Caco-2 (cell line): ENCODE measurements at regions of chr6 and their contacts with region 1.

Region 1: DNA sequence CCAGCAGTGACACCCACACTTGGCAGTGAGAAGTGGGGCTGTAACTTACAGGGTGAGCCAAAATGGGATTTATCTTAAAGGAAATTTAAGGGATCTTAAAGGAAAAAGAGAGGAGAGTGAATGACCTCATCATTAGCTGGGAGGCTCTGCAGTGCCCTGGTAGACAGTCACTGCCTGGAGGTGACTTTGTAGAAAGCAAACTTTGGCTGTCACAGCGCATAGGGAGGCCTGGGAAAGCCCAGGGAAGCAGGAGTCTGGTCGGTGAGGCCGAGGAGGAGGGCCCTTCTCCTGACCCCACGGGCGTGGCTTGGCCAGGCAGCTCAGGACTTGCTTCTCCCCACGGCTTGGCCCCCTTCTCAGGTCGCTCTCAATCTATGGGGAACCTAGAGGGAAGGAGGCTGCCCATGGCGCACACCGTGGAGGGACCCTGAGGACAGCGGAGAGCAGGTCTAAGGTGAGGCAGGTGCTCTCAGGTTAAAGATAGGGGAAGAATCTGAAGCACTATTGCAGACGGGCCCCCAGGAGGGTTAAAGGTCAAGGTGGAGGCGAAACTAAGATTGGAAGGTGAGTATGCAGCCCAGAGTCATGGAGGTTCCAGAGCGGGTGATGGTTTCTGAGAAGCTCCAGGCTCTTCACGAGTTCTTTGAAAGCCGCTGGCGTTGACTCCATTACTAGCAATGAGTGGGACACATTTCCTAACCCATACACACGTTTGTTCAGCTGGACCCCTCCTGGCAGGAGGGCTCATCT is 15.6 kb upstream of the RIPK1 start:
- DNase-seq: peak; percentile 63 to 74
- H3K4me3 ChIP-seq: peak overlapping the region; percentile 82
- H3K4me3 Mint-ChIP-seq: peak overlapping the region; percentile 84
- H3K27ac Mint-ChIP-seq: peak overlapping the region; percentile 89
- H3K4me1 ChIP-seq: peaks cover 13% of the 10 kb centered on the region
- H3K4me1 Mint-ChIP-seq: peaks cover 10% of the 10 kb centered on the region
- H3K27me3 ChIP-seq: no peaks in the 10 kb centered on the region
- H3K27me3 Mint-ChIP-seq: no peaks in the 10 kb centered on the region
- CTCF ChIP-seq: no peak

Region 2: GRCh38 chr6:2831392-2831791 is 221.3 kb before region 1 on chr6:
- CTCF ChIA-PET with region 1: no interaction called
- POLR2A ChIA-PET with region 1: no interaction called
- intact Hi-C with region 1: no loop called
- DNase-seq: no peak
- H3K4me3 ChIP-seq: no peak overlapping the region
- H3K4me3 Mint-ChIP-seq: no peak overlapping the region
- H3K27ac Mint-ChIP-seq: no peak overlapping the region
- H3K4me1 ChIP-seq: 0 out of 2 replicates have a peak, but pooled peaks cover 5% of the 10 kb centered on the region
- H3K4me1 Mint-ChIP-seq: peaks cover 19% of the 10 kb centered on the region
- H3K27me3 ChIP-seq: no peaks in the 10 kb centered on the region
- H3K27me3 Mint-ChIP-seq: no peaks in the 10 kb centered on the region
- CTCF ChIP-seq: no peak

Region 3: DNA sequence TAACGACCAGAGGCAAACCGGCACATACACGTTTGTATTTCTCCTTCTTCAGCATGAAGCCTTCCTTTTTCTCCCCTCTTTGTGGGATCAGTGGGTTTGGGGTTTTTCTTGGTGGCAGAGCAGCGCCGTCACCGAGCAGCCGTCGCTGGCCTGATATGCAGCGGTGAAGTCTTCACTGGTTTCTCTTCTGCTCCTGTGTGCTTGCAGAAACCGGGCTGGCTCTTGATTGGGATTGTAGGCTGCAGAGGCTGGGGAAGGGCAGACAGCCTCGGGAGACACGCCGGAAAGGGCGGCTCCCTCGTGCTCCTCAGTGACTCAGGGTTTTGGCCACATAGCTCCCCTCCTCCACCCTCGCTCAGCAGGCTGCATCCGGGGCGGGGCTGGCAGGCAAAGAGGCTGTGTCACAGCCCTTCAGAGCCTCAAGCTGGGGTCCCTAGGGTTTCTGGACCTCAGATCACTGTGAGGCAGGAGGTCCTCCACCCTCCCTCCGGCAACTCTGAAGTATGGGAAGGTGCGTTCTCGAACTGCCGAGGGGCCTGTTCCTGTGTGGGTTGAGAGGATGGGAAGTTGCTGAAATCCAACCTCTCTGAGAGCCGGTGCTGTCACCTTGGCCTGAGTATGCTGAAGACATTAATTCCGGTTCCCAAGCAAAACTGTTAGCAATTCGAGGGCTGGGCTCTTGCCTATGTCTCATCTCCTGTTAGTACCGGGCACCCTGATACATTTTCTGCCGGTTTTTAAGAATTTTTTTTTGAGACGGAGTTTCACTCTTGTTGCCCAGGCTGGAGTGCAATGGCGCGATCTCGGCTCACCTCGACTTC is 28.8 kb before region 1 on chr6:
- CTCF ChIA-PET with region 1: interaction called, 3 read pairs
- POLR2A ChIA-PET with region 1: interaction called, 8 read pairs
- intact Hi-C with region 1: loop called (anchors 2 kb)
- DNase-seq: peak; percentile 92 to 93
- H3K4me3 ChIP-seq: peak overlapping the region; percentile 59
- H3K4me3 Mint-ChIP-seq: peak overlapping the region; percentile 94
- H3K27ac Mint-ChIP-seq: peak overlapping the region; percentile 92
- H3K4me1 ChIP-seq: peaks cover 10% of the 10 kb centered on the region
- H3K4me1 Mint-ChIP-seq: no peaks in the 10 kb centered on the region
- H3K27me3 ChIP-seq: no peaks in the 10 kb centered on the region
- H3K27me3 Mint-ChIP-seq: no peaks in the 10 kb centered on the region
- CTCF ChIP-seq: no peak

Region 4: GRCh38 chr6:3031857-3032640 is 20.6 kb before region 1 on chr6:
- CTCF ChIA-PET with region 1: interaction called, 5 read pairs
- POLR2A ChIA-PET with region 1: no interaction called
- intact Hi-C with region 1: loop called (anchors 1 kb)
- DNase-seq: peak in 1 of 2 experiments; percentile 50
- H3K4me3 ChIP-seq: no peak overlapping the region
- H3K4me3 Mint-ChIP-seq: no peak overlapping the region
- H3K27ac Mint-ChIP-seq: no peak overlapping the region
- H3K4me1 ChIP-seq: no peaks in the 10 kb centered on the region
- H3K4me1 Mint-ChIP-seq: no peaks in the 10 kb centered on the region
- H3K27me3 ChIP-seq: no peaks in the 10 kb centered on the region
- H3K27me3 Mint-ChIP-seq: no peaks in the 10 kb centered on the region
- CTCF ChIP-seq: peak in 1 of 2 experiments; percentile 42